ENCODE measurements at regions of chr17 and their contacts with region 1.

Region 1: GRCh38 chr17:67376737-67377487 is at the start of gene PITPNC1:
- DNase-seq: peak; percentile 92
- ATAC-seq: peak; percentile 74
- H3K4me3 Mint-ChIP-seq: peak within 1 kb of the TSS; percentile 73
- H3K27ac Mint-ChIP-seq: peak within 1 kb of the TSS; percentile 90
- H3K4me1 Mint-ChIP-seq: peaks cover 40% of the 10 kb centered on the region
- H3K27me3 Mint-ChIP-seq: no peaks in the 10 kb centered on the region
- CTCF ChIP-seq: no peak
- total RNA-seq, gene PITPNC1: 51.8 to 56.3 TPM

Region 2: GRCh38 chr17:67260170-67261011 is 116.5 kb before region 1 on chr17:
- CTCF ChIA-PET with region 1: no interaction called
- POLR2A ChIA-PET with region 1: no interaction called
- intact Hi-C with region 1: no loop called
- DNase-seq: no peak
- ATAC-seq: no peak
- H3K4me3 Mint-ChIP-seq: no peak overlapping the region
- H3K27ac Mint-ChIP-seq: no peak overlapping the region
- H3K4me1 Mint-ChIP-seq: peaks cover 24% of the 10 kb centered on the region
- H3K27me3 Mint-ChIP-seq: no peaks in the 10 kb centered on the region
- CTCF ChIP-seq: no peak

Region 3: GRCh38 chr17:67390646-67391384 is 13.9 kb after region 1 on chr17:
- CTCF ChIA-PET with region 1: interaction called, 63 read pairs
- POLR2A ChIA-PET with region 1: interaction called, 22 read pairs
- intact Hi-C with region 1: no loop called
- DNase-seq: peak; percentile 90
- ATAC-seq: peak; percentile 88
- H3K4me3 Mint-ChIP-seq: peak overlapping the region; percentile 69
- H3K27ac Mint-ChIP-seq: peak overlapping the region; percentile 99
- H3K4me1 Mint-ChIP-seq: peaks cover 85% of the 10 kb centered on the region
- H3K27me3 Mint-ChIP-seq: no peaks in the 10 kb centered on the region
- CTCF ChIP-seq: no peak

Region 4: GRCh38 chr17:67441052-67441927 is 64.4 kb after region 1 on chr17:
- CTCF ChIA-PET with region 1: interaction called, 29 read pairs
- POLR2A ChIA-PET with region 1: interaction called, 38 read pairs
- intact Hi-C with region 1: no loop called
- DNase-seq: peak; percentile 90
- ATAC-seq: peak; percentile 90
- H3K4me3 Mint-ChIP-seq: peak overlapping the region; percentile 77
- H3K27ac Mint-ChIP-seq: peak overlapping the region; percentile 97
- H3K4me1 Mint-ChIP-seq: peaks cover 71% of the 10 kb centered on the region
- H3K27me3 Mint-ChIP-seq: no peaks in the 10 kb centered on the region
- CTCF ChIP-seq: no peak

Region 5: DNA sequence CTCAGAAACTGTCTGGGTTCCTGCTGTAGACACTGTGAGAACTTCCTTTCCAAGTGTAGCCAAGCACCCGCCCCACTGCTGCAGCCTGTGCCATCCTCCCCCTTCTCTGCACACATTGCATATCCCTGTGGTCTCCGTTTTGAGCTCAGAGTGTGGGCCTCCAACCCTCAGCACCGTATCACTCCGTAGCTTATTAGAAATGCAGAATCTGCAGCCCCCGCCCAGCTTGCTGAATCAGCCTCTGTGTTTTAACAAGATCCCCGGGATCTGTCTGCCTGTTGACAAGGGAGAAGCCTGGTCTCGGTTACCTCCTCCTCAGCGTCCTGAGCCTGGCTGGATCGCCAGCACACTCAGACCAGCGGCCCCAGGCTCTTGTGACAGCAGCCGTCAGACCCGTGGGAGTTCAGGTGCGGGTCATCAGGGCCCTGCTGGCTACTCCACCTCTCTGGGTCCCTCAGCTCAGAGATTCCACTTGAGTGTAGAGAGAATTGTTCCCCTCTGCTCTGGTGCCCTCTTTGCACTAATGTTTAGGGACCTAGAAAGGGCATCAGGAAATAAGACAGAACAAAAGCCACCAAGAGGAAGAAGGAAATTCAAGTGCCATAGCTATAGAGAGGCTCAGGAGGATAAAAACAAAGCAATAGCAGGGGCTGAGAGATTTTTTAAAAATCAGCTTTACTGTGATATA is 92.4 kb after region 1 on chr17:
- CTCF ChIA-PET with region 1: interaction called, 201 read pairs
- POLR2A ChIA-PET with region 1: interaction called, 86 read pairs
- intact Hi-C with region 1: no loop called
- DNase-seq: peak; percentile 80
- ATAC-seq: peak; percentile 79
- H3K4me3 Mint-ChIP-seq: peak overlapping the region; percentile 66
- H3K27ac Mint-ChIP-seq: peak overlapping the region; percentile 94
- H3K4me1 Mint-ChIP-seq: peaks cover 71% of the 10 kb centered on the region
- H3K27me3 Mint-ChIP-seq: no peaks in the 10 kb centered on the region
- CTCF ChIP-seq: no peak

Region 6: GRCh38 chr17:67569873-67570272 is 193.0 kb after region 1 on chr17:
- CTCF ChIA-PET with region 1: interaction called, 17 read pairs
- POLR2A ChIA-PET with region 1: no interaction called
- intact Hi-C with region 1: no loop called
- DNase-seq: no peak
- ATAC-seq: no peak
- H3K4me3 Mint-ChIP-seq: no peak overlapping the region
- H3K27ac Mint-ChIP-seq: peak overlapping the region; percentile 17
- H3K4me1 Mint-ChIP-seq: peaks cover 29% of the 10 kb centered on the region
- H3K27me3 Mint-ChIP-seq: no peaks in the 10 kb centered on the region
- CTCF ChIP-seq: no peak

Region 7: DNA sequence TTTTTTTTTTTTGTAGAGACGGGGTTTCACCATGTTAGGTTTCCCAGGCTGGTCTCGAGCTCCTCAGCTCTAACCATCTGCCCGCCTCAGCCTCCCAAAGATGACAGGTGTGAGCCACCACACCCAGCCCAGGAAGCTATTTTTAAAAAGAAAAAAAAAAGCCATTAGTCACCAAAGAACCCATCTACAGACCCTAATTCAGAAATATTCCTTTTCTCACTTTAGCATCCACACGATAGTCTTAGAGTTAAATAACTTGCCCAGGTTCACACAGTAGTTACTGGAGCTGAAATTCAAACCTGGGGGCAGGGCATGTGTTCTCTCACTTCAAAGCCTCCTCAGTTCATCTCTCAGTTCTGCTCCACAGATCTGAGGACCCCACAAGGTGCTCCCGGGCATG is 270.6 kb after region 1 on chr17:
- CTCF ChIA-PET with region 1: interaction called, 15 read pairs
- POLR2A ChIA-PET with region 1: interaction called, 3 read pairs
- intact Hi-C with region 1: no loop called
- DNase-seq: no peak
- ATAC-seq: no peak
- H3K4me3 Mint-ChIP-seq: no peak overlapping the region
- H3K27ac Mint-ChIP-seq: no peak overlapping the region
- H3K4me1 Mint-ChIP-seq: peaks cover 24% of the 10 kb centered on the region
- H3K27me3 Mint-ChIP-seq: no peaks in the 10 kb centered on the region
- CTCF ChIP-seq: no peak